CD4-positive, alpha-beta T cell (primary cell): ENCODE measurements at regions of chr5 and their contacts with region 1.

Region 1: DNA sequence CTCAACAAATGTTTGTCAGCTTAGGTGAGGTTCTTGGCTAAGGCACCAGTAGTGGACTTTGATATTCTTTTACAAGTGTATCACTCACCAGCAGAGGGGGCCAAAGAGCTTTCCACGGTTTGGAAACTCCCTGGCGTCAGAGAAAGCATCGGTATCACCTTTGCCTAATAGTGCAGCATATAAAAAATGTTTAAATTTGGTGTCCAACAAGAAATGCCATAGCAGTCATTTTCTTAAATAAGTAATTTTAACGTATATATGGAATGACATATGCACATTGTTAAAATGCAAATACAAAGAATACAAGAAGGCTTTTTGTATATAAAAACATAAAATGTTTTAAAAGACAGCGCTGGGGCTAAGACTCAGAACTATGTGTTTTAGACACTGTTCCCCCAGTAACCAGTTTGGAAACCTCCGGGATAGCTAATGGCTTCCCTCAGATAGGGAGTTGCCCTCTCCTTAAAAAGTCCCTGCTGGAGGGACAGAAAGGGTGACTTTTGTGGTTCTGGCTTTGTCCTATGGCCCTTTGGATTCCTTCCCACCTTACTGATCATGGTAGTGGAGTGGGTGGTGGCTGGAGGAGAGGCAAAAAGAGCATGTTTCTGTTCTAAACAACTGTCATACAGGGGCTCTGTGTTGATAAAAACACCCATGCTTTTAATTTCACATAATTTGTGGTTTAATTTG is 124.6 kb downstream of the GPBP1 start:
- DNase-seq: peak; percentile 66 to 93 (median 81)
- ATAC-seq: peak; percentile 87
- H3K4me3 ChIP-seq: peak overlapping the region; percentile 53
- H3K4me3 Mint-ChIP-seq: peak overlapping the region; percentile 68
- H3K27ac ChIP-seq: peak overlapping the region in 1 of 2 donors; percentile 11
- H3K27ac Mint-ChIP-seq: peak overlapping the region; percentile 64
- H3K4me1 ChIP-seq: peaks cover 13% of the 10 kb centered on the region
- H3K4me1 Mint-ChIP-seq: peaks cover 23% of the 10 kb centered on the region
- H3K27me3 ChIP-seq: no peaks in the 10 kb centered on the region
- H3K27me3 Mint-ChIP-seq: no peaks in the 10 kb centered on the region
- CTCF ChIP-seq: peak; percentile 69

Region 2: GRCh38 chr5:57193757-57194413 is 104.6 kb before region 1 on chr5:
- CTCF ChIA-PET with region 1: no interaction called
- POLR2A ChIA-PET with region 1: no interaction called
- intact Hi-C with region 1: no loop called
- DNase-seq: peak in 2 of 14 experiments; percentile 43 to 46
- ATAC-seq: peak; percentile 63
- H3K4me3 ChIP-seq: no peak overlapping the region
- H3K4me3 Mint-ChIP-seq: peak overlapping the region; percentile 65
- H3K27ac ChIP-seq: no peak overlapping the region
- H3K27ac Mint-ChIP-seq: peak overlapping the region; percentile 77
- H3K4me1 ChIP-seq: peaks cover 54% of the 10 kb centered on the region
- H3K4me1 Mint-ChIP-seq: peaks cover 75% of the 10 kb centered on the region
- H3K27me3 ChIP-seq: no peaks in the 10 kb centered on the region
- H3K27me3 Mint-ChIP-seq: no peaks in the 10 kb centered on the region
- CTCF ChIP-seq: no peak

Region 3: GRCh38 chr5:57327561-57328394 is 29.3 kb after region 1 on chr5:
- CTCF ChIA-PET with region 1: no interaction called
- POLR2A ChIA-PET with region 1: no interaction called
- intact Hi-C with region 1: no loop called
- DNase-seq: no peak
- ATAC-seq: no peak
- H3K4me3 ChIP-seq: no peak overlapping the region
- H3K4me3 Mint-ChIP-seq: no peak overlapping the region
- H3K27ac ChIP-seq: no peak overlapping the region
- H3K27ac Mint-ChIP-seq: no peak overlapping the region
- H3K4me1 ChIP-seq: no peaks in the 10 kb centered on the region
- H3K4me1 Mint-ChIP-seq: peaks cover 7% of the 10 kb centered on the region
- H3K27me3 ChIP-seq: no peaks in the 10 kb centered on the region
- H3K27me3 Mint-ChIP-seq: no peaks in the 10 kb centered on the region
- CTCF ChIP-seq: no peak

Region 4: DNA sequence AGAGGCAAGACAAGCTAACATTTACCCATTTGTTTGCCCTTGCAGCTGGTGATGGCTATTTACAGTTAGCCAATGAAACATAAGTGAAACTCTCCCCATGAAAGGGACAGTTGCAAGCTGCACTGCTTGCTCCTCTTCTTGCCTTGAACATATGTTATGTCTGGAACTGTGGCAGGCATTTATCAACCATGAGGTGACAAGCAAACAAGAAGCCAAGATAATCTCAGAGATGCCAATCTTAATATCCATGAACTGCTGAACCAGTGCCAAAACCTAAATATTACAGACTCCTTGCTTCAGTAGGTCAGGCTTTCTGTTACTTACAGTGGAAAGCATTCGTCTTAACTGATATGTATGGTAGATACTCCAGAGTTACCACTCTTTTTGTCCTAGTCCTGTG is 50.8 kb after region 1 on chr5:
- CTCF ChIA-PET with region 1: no interaction called
- POLR2A ChIA-PET with region 1: no interaction called
- intact Hi-C with region 1: no loop called
- DNase-seq: no peak
- ATAC-seq: no peak
- H3K4me3 ChIP-seq: no peak overlapping the region
- H3K4me3 Mint-ChIP-seq: no peak overlapping the region
- H3K27ac ChIP-seq: no peak overlapping the region
- H3K27ac Mint-ChIP-seq: no peak overlapping the region
- H3K4me1 ChIP-seq: no peaks in the 10 kb centered on the region
- H3K4me1 Mint-ChIP-seq: no peaks in the 10 kb centered on the region
- H3K27me3 ChIP-seq: no peaks in the 10 kb centered on the region
- H3K27me3 Mint-ChIP-seq: peaks cover 8% of the 10 kb centered on the region
- CTCF ChIP-seq: no peak

Region 5: DNA sequence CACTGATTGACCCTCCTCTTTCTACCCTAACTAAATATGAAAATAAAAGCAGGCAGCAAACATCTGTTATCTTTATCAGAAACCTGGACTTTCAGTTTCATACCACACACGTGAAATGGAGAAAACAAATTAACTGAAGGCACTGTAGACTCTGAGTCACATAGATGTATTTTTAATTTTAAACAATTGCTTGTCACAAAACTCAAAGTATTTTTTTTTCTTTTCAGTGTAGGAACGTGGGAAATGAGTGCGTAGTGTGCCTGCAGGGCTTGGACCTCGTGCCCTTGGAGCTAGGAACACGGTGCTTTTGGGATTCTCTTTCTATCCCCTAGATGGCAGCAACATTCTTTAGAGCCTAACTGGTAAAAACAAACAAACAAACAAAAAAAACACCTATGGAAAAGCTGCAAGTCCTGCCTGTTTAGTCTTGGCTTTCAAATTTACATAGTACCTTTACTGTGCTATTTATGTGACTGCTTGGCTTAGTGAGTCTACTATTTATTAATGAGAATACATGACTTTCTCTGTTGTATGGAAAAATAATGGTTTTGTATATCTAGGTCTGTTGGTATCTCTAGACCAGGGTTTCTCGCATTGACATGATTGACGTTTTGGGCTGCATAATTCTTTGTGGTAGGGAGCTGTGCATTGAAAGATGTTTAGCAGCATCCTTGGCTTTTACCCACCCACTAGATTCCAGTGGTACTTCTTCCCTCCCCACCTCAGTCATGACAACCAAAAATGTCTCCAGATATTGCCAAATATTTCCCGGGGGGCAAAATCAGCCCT is 201.0 kb after region 1 on chr5:
- CTCF ChIA-PET with region 1: no interaction called
- POLR2A ChIA-PET with region 1: no interaction called
- intact Hi-C with region 1: loop called in 1 of 2 experiments (anchors 5 kb)
- DNase-seq: peak in 4 of 14 experiments; percentile 21 to 49 (median 42)
- ATAC-seq: no peak
- H3K4me3 ChIP-seq: peak overlapping the region; percentile 15
- H3K4me3 Mint-ChIP-seq: peak overlapping the region; percentile 81
- H3K27ac ChIP-seq: no peak overlapping the region
- H3K27ac Mint-ChIP-seq: peak overlapping the region; percentile 54
- H3K4me1 ChIP-seq: peaks cover 13% of the 10 kb centered on the region
- H3K4me1 Mint-ChIP-seq: peaks cover 34% of the 10 kb centered on the region
- H3K27me3 ChIP-seq: no peaks in the 10 kb centered on the region
- H3K27me3 Mint-ChIP-seq: no peaks in the 10 kb centered on the region
- CTCF ChIP-seq: peak; percentile 71

Region 6: DNA sequence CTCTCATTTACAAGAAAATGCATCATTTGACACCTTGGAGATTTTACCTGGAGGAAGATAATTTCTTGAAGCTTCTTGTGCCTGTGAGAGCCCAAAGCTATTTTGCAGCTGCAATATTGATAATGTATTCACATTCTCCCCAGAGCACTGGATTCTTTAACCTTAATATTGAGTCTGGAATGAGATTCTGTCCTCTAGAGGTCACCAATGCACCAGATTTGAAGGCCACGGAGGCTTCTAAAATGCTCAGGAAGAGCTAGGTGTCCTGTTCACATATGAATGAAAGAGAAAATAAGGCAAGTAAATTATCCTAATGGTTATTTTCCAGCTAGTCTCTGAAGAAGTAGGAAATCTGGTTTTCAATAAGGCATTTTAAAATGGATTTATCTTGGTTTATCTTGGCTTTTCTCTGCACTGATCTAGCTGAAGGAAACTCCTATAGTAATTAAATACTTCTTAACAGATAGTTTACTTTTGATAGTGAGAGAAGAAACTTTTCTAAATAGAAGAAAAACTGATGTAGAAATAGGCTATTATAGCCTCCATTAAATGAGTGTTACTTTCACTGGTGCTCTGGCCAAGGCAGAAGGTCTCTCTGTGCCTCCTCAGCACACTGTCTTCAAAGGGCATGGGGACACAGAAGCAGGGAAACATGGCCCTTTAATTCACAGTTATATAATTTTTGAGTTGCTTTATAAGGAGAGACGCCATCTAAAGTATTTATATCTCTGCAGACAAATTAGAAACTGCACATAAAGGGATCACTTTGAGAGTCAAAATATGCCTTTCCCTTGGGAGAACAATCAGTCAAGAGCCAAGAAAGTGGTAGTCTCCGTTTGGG is 481.2 kb after region 1 on chr5:
- CTCF ChIA-PET with region 1: no interaction called
- POLR2A ChIA-PET with region 1: no interaction called
- intact Hi-C with region 1: loop called (anchors 2 to 10 kb)
- DNase-seq: peak in 4 of 14 experiments; percentile 21 to 47 (median 40)
- ATAC-seq: no peak
- H3K4me3 ChIP-seq: no peak overlapping the region
- H3K4me3 Mint-ChIP-seq: no peak overlapping the region
- H3K27ac ChIP-seq: no peak overlapping the region
- H3K27ac Mint-ChIP-seq: no peak overlapping the region
- H3K4me1 ChIP-seq: no peaks in the 10 kb centered on the region
- H3K4me1 Mint-ChIP-seq: no peaks in the 10 kb centered on the region
- H3K27me3 ChIP-seq: peaks cover 0 to 5% of the 10 kb centered on the region in 2 experiments
- H3K27me3 Mint-ChIP-seq: no peaks in the 10 kb centered on the region
- CTCF ChIP-seq: peak; percentile 49

Region 7: GRCh38 chr5:58849921-58850667 is 1551.7 kb after region 1 on chr5:
- CTCF ChIA-PET with region 1: no interaction called
- POLR2A ChIA-PET with region 1: no interaction called
- intact Hi-C with region 1: loop called in 1 of 2 experiments (anchors 5 kb)
- DNase-seq: peak in 3 of 14 experiments; percentile 13 to 31 (median 24)
- ATAC-seq: no peak
- H3K4me3 ChIP-seq: no peak overlapping the region
- H3K4me3 Mint-ChIP-seq: no peak overlapping the region
- H3K27ac ChIP-seq: no peak overlapping the region
- H3K27ac Mint-ChIP-seq: no peak overlapping the region
- H3K4me1 ChIP-seq: no peaks in the 10 kb centered on the region
- H3K4me1 Mint-ChIP-seq: no peaks in the 10 kb centered on the region
- H3K27me3 ChIP-seq: no peaks in the 10 kb centered on the region
- H3K27me3 Mint-ChIP-seq: peaks cover 18% of the 10 kb centered on the region
- CTCF ChIP-seq: peak; percentile 30